Right ventricle myocardium inferior (tissue), 1 donor: ENCODE measurements at regions of chr2 and their contacts with region 1.

Region 1: DNA sequence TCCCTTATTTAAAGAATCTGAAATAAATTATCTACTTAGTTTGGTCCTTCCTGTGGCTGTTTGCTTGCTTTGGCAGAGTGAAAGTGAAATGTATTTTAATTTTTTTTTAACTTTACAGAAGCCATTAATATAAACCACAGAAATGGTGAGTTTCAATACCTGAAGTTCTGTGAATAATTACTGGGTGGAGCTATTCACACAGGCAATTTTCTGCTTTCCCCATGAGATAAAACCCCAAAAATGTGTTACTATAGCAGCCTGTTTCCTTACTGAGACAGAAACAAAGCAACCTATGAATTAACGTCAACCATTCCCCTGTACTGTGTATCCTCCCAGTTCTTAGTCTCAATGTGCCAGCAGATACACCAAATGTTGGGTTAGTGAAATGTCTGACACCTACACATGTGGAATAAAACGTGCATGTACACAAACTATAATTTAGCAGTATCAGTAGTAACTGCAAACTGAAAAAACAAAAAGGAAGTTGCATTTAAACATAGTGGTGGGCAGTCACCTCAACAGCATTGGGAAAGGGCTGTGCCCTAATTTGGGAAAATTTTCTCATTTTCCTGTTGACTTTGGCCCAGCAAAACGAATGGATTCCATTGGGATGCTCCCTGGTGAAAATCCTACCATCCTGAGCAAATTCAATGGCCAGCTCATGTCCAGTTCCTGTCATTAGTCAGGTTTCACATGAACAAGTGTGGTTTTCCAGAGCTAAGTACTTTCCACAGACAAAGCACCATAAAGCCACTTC is 73.1 kb upstream of the RMDN2 start:
- DNase-seq: no peak
- ATAC-seq: no peak

Region 2: GRCh38 chr2:37871456-37872191 is 19.6 kb after region 1 on chr2:
- intact Hi-C with region 1: loop called (anchors 2 kb)
- DNase-seq: no peak
- ATAC-seq: no peak